OCI-LY7 (cell line): ENCODE measurements at regions of chr19 and their contacts with region 1.

Region 1: DNA sequence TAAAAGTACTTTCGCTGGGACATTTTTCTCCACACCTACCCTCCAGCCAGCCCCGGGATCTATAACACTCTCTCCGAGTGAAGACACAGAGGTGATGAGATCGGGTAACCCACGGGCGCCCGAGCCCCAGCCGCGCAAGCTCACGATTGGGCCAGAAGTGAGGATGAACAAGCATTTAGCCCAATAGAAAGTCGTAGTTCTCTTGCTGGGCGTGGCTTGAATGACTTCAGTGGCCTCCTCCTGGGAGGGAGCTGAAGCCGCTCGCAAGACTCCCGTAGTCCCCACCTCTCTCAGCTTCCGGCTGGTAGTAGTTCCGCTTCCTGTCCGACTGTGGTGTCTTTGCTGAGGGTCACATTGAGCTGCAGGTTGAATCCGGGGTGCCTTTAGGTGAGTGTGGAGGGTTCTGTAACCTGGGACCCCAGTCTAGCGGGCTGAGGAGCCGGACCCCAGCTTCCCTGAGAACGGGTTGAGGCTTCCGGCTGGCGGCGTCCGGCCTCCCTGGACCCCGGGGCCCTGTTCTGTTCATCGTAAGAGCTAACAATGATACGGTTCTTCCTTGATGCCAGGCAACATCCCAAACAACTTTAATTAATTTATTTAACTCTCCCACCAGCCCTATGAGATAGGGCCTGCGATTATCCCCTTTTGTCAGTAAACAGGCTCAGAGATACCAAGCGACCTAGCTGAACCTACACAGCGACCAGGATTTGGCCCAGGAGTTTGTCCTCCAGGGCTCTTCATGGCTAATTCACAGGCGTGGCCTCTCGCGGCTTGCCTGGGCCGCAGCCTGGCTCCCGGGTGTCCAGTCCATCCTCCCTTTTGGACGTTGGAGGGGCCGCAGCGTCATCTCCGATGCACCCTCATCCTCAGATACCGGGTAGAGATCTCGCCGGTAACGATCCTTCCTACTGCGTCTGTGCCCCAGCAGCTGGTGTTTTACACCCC is at the start of gene COX6B1:
- DNase-seq: peak; percentile 99
- H3K4me3 ChIP-seq: peak within 1 kb of the TSS; percentile 89
- H3K27ac ChIP-seq: peak within 1 kb of the TSS; percentile 44
- H3K4me1 ChIP-seq: peaks cover 36% of the 10 kb centered on the region
- CTCF ChIP-seq: no peak
- total RNA-seq, gene COX6B1: 404 and 536 TPM in 2 replicates

Region 2: GRCh38 chr19:35545001-35545911 is 103.0 kb before region 1 on chr19 and contains the start of gene TMEM147:
- CTCF ChIA-PET with region 1: interaction called, 3 read pairs
- POLR2A ChIA-PET with region 1: interaction called, 3 read pairs
- intact Hi-C with region 1: loop called (anchors 5 kb)
- DNase-seq: peak; percentile 92
- H3K4me3 ChIP-seq: peak within 1 kb of the TSS; percentile 80
- H3K27ac ChIP-seq: peak within 1 kb of the TSS; percentile 4
- H3K4me1 ChIP-seq: peaks cover 28% of the 10 kb centered on the region
- CTCF ChIP-seq: no peak
- total RNA-seq, gene TMEM147: 83.2 and 85.8 TPM in 2 replicates

Region 3: DNA sequence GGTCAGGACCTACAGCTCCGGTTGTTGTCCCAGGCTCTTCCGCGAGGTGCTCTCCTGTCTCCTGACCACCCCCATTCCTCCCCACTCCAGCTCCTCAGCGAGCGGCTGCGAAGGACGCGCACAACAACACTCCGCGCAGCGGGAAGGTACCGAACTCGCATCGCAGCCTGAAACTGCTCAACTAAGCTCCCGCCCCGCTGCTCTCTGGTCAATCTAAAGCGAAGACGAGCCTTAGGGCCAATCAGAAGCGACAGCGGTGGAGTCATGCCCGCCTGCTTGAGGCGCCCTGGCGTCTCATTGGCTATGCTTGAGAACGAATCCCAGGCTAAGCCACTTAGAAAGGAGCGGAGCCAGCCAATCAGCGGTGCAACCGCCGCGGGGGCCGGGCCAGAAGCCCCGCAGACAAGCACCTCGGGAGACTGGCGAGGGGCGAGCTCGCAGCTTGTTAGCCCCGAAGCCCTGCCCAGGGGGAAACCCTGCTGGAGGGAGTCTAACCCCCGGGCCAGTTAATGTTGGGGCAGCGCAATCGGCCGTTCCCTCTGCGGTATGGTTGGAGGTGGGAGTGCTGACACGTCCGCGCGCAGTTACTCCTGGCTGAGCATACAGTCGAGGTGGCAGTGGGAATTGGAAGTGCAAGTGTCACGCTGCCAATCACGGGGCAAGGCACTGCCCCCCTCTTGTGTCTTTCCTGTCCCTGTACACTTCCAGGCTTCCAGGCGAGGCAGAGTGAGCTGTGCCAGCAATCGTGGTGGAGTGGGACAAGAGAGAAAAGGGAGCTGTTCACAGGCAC is 54.1 kb after region 1 on chr19:
- CTCF ChIA-PET with region 1: no interaction called
- POLR2A ChIA-PET with region 1: interaction called, 10 read pairs
- intact Hi-C with region 1: no loop called
- DNase-seq: peak; percentile 99
- H3K4me3 ChIP-seq: peak overlapping the region; percentile 67
- H3K27ac ChIP-seq: no peak overlapping the region
- H3K4me1 ChIP-seq: peaks cover 15% of the 10 kb centered on the region
- CTCF ChIP-seq: no peak